ENCODE measurements at regions of chr10 and their contacts with region 1.

Region 1: GRCh38 chr10:59625721-59626522 is 83.7 kb downstream of the SLC16A9 start:
- DNase-seq: peak in 1 of 2 donors; percentile 80
- ATAC-seq: peak; percentile 76 to 90 (median 89)
- H3K4me3 ChIP-seq: no peak overlapping the region
- H3K4me3 Mint-ChIP-seq: no peak overlapping the region
- H3K27ac ChIP-seq: no peak overlapping the region
- H3K27ac Mint-ChIP-seq: no peak overlapping the region
- H3K4me1 ChIP-seq: no peaks in the 10 kb centered on the region
- H3K4me1 Mint-ChIP-seq: peaks cover 0 to 5% of the 10 kb centered on the region in 2 donors
- H3K27me3 ChIP-seq: no peaks in the 10 kb centered on the region
- H3K27me3 Mint-ChIP-seq: no peaks in the 10 kb centered on the region
- CTCF ChIP-seq: peak; percentile 79

Region 2: DNA sequence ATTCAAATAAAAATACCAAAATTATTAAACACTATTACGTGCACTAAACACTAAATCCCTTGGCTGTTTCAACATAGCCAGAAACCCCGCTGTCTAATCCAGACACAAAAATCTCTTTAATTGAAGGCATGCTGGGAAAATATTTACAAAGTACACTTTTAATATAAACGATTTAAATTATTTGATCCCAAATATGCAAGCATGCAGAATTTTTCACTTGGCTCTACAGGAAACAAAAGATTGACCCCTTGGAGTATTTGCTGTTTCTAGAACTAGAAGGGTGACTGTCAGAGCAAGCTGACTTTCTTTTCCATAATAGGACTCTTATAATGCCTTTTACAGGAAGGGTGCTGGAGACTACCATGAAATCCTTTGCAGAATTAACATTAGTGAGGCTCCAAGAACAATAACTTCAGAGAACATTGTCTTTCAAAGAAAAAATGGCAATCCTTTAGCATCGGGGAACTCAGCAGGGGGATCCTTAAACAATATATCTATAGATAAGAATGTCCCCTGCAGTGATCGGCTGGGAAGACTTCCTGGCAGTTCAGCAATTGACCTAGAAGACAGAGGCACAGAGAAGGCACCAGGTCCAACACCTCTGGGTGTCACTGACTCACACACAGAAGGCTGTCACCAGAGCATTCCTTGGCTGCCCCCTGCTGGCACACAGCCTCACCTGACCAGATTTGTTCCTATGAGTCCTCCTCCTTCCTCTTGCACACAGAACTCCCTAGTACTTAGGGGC is 183.1 kb after region 1 on chr10:
- intact Hi-C with region 1: loop called (anchors 1 kb)
- DNase-seq: peak; percentile 61 to 62
- ATAC-seq: peak; percentile 87 to 99 (median 99)
- H3K4me3 ChIP-seq: no peak overlapping the region
- H3K4me3 Mint-ChIP-seq: no peak overlapping the region
- H3K27ac ChIP-seq: no peak overlapping the region
- H3K27ac Mint-ChIP-seq: peak overlapping the region in 1 of 2 donors; percentile 46
- H3K4me1 ChIP-seq: no peaks in the 10 kb centered on the region
- H3K4me1 Mint-ChIP-seq: peaks cover 0 to 12% of the 10 kb centered on the region in 2 donors
- H3K27me3 ChIP-seq: no peaks in the 10 kb centered on the region
- H3K27me3 Mint-ChIP-seq: no peaks in the 10 kb centered on the region
- CTCF ChIP-seq: peak; percentile 62

Region 3: GRCh38 chr10:60032723-60033122 is 406.8 kb after region 1 on chr10:
- intact Hi-C with region 1: loop called (anchors 2 kb)
- DNase-seq: peak in 1 of 2 donors; percentile 58
- ATAC-seq: peak; percentile 57 to 82 (median 78)
- H3K4me3 ChIP-seq: no peak overlapping the region
- H3K4me3 Mint-ChIP-seq: no peak overlapping the region
- H3K27ac ChIP-seq: no peak overlapping the region
- H3K27ac Mint-ChIP-seq: no peak overlapping the region
- H3K4me1 ChIP-seq: no peaks in the 10 kb centered on the region
- H3K4me1 Mint-ChIP-seq: no peaks in the 10 kb centered on the region
- H3K27me3 ChIP-seq: no peaks in the 10 kb centered on the region
- H3K27me3 Mint-ChIP-seq: no peaks in the 10 kb centered on the region
- CTCF ChIP-seq: no peak

Region 4: GRCh38 chr10:60208676-60209269 is 582.9 kb after region 1 on chr10:
- intact Hi-C with region 1: loop called (anchors 5 kb)
- DNase-seq: no peak
- ATAC-seq: no peak
- H3K4me3 ChIP-seq: no peak overlapping the region
- H3K4me3 Mint-ChIP-seq: no peak overlapping the region
- H3K27ac ChIP-seq: no peak overlapping the region
- H3K27ac Mint-ChIP-seq: no peak overlapping the region
- H3K4me1 ChIP-seq: no peaks in the 10 kb centered on the region
- H3K4me1 Mint-ChIP-seq: peaks cover 0 to 6% of the 10 kb centered on the region in 2 donors
- H3K27me3 ChIP-seq: no peaks in the 10 kb centered on the region
- H3K27me3 Mint-ChIP-seq: peaks cover 0 to 3% of the 10 kb centered on the region in 2 donors
- CTCF ChIP-seq: no peak

Region 5: DNA sequence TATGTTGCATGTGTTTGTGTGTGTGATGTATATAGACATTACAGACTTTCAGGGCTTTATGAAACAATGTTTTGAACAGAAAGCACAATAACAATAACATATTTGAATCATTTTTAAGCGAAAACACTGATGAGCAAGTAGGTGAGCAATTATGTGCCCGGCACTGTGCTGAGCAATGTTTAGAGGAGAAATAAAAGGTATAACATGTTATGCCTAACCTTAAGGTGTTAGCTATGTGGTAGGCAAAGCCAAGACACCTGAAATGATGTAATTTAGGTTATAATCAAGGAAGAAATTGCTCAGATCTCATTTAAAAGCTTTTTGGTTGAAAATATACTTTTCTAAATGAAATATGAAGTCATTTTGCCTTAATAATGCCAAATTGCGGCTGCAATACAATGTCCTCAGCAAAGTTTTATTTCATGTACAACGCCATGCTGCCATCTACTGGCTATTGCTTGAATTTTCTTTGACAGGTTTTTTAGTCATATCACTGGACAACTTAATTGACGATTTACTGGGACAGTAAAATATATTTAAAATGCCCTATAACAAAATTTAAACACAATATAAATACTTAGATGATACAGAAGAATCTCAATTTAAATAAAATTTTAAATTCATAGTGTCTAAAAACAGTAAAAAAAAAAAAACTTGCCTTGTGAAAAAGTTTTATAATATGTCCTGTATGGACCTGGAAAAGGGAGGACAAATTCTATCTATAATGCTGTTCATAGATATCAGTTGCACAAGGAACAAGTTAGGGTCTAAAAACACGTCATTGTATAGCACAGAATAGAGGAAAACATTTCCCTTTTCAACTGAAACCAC is 1021.3 kb after region 1 on chr10:
- intact Hi-C with region 1: loop called (anchors 1 kb)
- DNase-seq: peak in 1 of 2 donors; percentile 77
- ATAC-seq: peak in 2 of 3 donors; percentile 53 to 67
- H3K4me3 ChIP-seq: no peak overlapping the region
- H3K4me3 Mint-ChIP-seq: no peak overlapping the region
- H3K27ac ChIP-seq: no peak overlapping the region
- H3K27ac Mint-ChIP-seq: no peak overlapping the region
- H3K4me1 ChIP-seq: no peaks in the 10 kb centered on the region
- H3K4me1 Mint-ChIP-seq: no peaks in the 10 kb centered on the region
- H3K27me3 ChIP-seq: no peaks in the 10 kb centered on the region
- H3K27me3 Mint-ChIP-seq: no peaks in the 10 kb centered on the region
- CTCF ChIP-seq: peak; percentile 87

Region 6: DNA sequence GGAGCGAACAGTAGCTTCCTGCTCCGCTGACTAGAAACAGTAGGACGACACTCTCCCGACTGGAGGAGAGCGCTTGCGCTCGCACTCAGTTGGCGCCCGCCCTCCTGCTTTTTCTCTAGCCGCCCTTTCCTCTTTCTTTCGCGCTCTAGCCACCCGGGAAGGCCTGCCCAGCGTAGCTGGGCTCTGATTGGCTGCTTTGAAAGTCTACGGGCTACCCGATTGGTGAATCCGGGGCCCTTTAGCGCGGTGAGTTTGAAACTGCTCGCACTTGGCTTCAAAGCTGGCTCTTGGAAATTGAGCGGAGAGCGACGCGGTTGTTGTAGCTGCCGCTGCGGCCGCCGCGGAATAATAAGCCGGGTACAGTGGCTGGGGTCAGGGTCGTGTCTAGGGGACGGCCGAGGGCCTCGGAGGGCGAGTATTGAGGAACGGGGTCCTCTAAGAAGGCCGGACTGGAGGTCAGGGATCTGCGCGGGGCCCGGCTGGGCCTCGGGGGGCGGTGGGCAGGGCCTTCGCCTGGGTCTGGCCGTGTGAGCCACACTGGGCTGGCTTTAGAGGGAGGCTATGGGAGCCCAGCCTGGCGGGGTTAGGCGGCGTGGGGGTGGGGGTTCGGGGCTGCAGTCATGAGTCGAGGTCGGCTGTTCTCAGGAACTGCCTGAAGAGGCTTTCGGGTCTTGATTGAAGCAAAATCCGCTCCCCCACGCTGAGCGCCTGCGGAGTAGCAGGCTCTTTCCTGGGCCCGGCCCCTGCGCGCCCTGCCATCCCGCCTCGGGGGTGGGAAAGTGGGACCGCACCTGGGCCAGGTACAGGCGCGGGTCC is 1152.5 kb after region 1 on chr10 and contains the start of gene CDK1:
- intact Hi-C with region 1: loop called (anchors 10 kb)
- DNase-seq: peak; percentile 92 to 96
- ATAC-seq: peak; percentile 97 to 99 (median 98)
- H3K4me3 ChIP-seq: peak within 1 kb of the TSS; percentile 72
- H3K4me3 Mint-ChIP-seq: peak within 1 kb of the TSS; percentile 100
- H3K27ac ChIP-seq: no peak within 1 kb of the TSS
- H3K27ac Mint-ChIP-seq: peak within 1 kb of the TSS; percentile 83 to 90
- H3K4me1 ChIP-seq: peaks cover 7% of the 10 kb centered on the region
- H3K4me1 Mint-ChIP-seq: peaks cover 7% of the 10 kb centered on the region in 2 donors
- H3K27me3 ChIP-seq: no peaks in the 10 kb centered on the region
- H3K27me3 Mint-ChIP-seq: peaks cover 0 to 3% of the 10 kb centered on the region in 2 donors
- CTCF ChIP-seq: no peak
- total RNA-seq, gene CDK1: 1.1 to 2.4 (median 1.9) TPM

Measured in natural killer cell (primary cell).